ENCODE measurements at regions of chr9 and their contacts with region 1.

Region 1: GRCh38 chr9:2727966-2728613 is 10.8 kb downstream of the KCNV2 start:
- DNase-seq: no peak
- H3K4me3 ChIP-seq: no peak overlapping the region
- H3K27ac ChIP-seq: no peak overlapping the region
- H3K4me1 ChIP-seq: peaks cover 0 to 8% (median 7%) of the 10 kb centered on the region in 4 donors
- H3K27me3 ChIP-seq: no peaks in the 10 kb centered on the region
- CTCF ChIP-seq: peak; percentile 48 to 60 (median 52)
- EP300 ChIP-seq: no peak
- POLR2A ChIP-seq: no peak

Region 2: DNA sequence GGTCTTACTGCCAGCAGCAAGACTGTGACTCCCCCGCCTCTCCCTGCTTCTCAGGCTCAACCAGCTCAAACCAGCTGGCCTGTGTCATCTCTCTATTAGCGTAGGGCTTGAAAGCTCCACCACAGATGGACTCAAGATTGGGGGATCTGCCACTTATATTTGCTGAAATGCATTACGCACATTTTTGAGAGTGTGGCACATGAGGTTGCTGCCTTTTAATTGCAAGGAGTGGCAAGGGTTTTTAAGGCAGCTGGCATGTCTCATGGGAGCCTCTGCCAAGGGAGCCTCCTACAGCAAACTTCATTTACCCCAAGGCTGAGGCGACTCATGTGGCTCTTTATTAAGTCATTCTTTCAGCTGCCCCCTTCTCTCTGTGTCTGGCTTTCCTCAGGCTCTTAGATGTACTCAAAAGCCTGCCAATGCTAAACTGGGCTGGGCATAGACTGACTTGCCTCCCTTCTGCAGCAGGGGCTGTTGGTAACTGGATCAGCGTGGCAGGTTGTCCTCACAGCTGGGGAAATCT is 493.7 kb before region 1 on chr9:
- intact Hi-C with region 1: loop called (anchors 10 kb)
- DNase-seq: no peak
- H3K4me3 ChIP-seq: no peak overlapping the region
- H3K27ac ChIP-seq: no peak overlapping the region
- H3K4me1 ChIP-seq: peaks cover 0 to 10% (median 9%) of the 10 kb centered on the region in 4 donors
- H3K27me3 ChIP-seq: no peaks in the 10 kb centered on the region
- CTCF ChIP-seq: no peak
- EP300 ChIP-seq: no peak
- POLR2A ChIP-seq: no peak

Region 3: DNA sequence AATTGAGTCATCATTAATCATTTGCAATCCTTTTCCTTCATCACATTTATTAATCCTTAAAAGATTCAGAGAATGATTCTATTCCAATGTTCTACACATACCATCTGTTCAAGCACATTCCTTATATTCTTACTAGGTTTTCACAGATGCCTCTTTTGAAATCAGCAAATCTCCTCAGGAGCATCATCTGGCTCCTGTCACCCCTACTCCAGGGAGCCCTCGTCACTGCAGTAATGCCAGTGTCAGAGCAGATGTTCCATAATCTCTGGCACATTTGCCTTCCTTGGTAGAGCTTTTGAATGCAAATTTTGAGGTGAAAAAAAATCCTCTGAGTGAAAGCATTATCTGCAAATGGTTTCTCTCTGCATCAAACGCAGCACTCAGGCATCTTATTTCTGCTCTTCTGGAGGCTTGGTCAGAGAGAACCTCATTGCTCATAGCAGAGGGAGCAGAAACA is 18.4 kb before region 1 on chr9:
- intact Hi-C with region 1: loop called (anchors 2 kb)
- DNase-seq: no peak
- H3K4me3 ChIP-seq: no peak overlapping the region
- H3K27ac ChIP-seq: no peak overlapping the region
- H3K4me1 ChIP-seq: no peaks in the 10 kb centered on the region
- H3K27me3 ChIP-seq: no peaks in the 10 kb centered on the region
- CTCF ChIP-seq: no peak
- EP300 ChIP-seq: no peak
- POLR2A ChIP-seq: no peak

Region 4: GRCh38 chr9:2857564-2858198 is 129.6 kb after region 1 on chr9:
- intact Hi-C with region 1: no loop called
- DNase-seq: peak; percentile 86
- H3K4me3 ChIP-seq: no peak overlapping the region
- H3K27ac ChIP-seq: no peak overlapping the region
- H3K4me1 ChIP-seq: no peaks in the 10 kb centered on the region
- H3K27me3 ChIP-seq: peaks cover 0 to 13% (median 0%) of the 10 kb centered on the region in 4 donors
- CTCF ChIP-seq: peak; percentile 69 to 82 (median 78)
- EP300 ChIP-seq: no peak
- POLR2A ChIP-seq: no peak

Region 5: DNA sequence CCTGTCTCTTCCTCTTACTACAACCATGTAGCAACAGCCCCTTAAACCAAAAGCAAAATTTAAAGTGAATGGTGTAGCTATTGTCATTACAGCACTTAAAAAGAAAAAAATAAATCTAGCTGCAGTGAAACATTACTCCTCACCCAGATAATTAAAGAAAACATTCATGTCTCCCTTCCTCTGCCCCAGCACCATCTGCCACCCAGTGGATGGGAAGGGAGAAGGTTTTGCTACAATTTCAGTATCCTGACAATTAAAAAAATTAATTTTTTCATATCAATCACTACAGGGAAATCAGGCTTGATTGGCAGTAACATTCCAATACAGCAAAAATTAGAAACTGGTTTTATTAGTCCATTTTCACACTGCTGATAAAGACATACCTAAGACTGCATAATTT is 263.2 kb after region 1 on chr9:
- intact Hi-C with region 1: no loop called
- DNase-seq: peak; percentile 0
- H3K4me3 ChIP-seq: no peak overlapping the region
- H3K27ac ChIP-seq: no peak overlapping the region
- H3K4me1 ChIP-seq: no peaks in the 10 kb centered on the region
- H3K27me3 ChIP-seq: no peaks in the 10 kb centered on the region
- CTCF ChIP-seq: no peak
- EP300 ChIP-seq: no peak
- POLR2A ChIP-seq: no peak

Region 6: GRCh38 chr9:3028535-3028934 is 300.4 kb after region 1 on chr9:
- intact Hi-C with region 1: no loop called
- DNase-seq: no peak
- H3K4me3 ChIP-seq: no peak overlapping the region
- H3K27ac ChIP-seq: no peak overlapping the region
- H3K4me1 ChIP-seq: peaks cover 0 to 9% (median 0%) of the 10 kb centered on the region in 4 donors
- H3K27me3 ChIP-seq: no peaks in the 10 kb centered on the region
- CTCF ChIP-seq: no peak
- EP300 ChIP-seq: no peak
- POLR2A ChIP-seq: no peak